SK-N-SH (cell line): ENCODE measurements at regions of chr5 and their contacts with region 1.

Region 1: DNA sequence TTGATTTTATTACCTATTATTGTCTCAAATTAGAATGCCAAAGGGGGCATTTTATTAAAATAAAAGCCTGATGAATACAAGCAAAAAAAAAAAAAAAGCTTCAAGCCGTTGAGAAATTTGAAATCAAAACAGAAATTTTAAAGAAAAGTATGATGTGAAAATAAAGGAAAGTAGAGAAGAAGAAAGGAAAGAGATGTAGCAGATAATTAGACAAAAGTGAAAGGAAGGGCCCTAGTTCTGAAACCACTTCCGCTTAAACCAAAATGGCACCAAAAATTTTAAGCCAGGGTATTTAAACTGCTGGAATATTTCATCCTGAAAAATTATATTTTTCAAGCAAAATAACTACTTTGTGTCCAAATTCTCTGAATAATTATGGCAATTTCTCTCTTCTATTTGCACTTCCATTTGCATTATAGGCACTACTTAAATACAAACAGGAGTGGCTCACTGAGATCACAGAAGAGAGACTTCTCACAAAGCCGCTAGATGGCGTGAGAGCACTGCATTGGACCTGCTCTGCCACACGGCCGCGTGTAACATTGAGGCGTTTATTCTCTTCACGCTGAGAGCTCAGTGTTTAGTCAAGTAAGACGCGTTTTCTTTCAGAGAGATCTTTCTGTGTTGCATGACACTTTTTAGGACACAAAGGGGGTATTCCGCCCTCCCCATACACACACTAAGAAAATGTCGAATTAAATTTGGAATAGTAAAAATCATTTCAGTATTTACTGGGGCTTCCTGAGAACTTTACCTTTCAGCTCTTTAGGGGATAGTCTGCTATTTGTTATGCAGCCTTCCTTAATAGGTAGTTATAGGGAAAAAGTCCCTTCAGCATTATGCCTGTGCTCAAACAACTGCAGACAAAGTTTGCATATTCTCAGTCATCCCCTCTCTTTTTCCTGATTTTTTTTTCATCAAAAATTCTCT is 368.4 kb upstream of the CCNH start:
- DNase-seq: peak; percentile 49
- H3K4me3 ChIP-seq: no peak overlapping the region; a peak in 1 of 4 replicates
- H3K27ac ChIP-seq: no peak overlapping the region
- H3K4me1 ChIP-seq: no peaks in the 10 kb centered on the region
- H3K27me3 ChIP-seq: peaks cover 11% of the 10 kb centered on the region; the same call in 1 of the 2 replicates
- CTCF ChIP-seq: peak; percentile 93
- EP300 ChIP-seq: no peak
- RAD21 ChIP-seq: peak; percentile 98

Region 2: DNA sequence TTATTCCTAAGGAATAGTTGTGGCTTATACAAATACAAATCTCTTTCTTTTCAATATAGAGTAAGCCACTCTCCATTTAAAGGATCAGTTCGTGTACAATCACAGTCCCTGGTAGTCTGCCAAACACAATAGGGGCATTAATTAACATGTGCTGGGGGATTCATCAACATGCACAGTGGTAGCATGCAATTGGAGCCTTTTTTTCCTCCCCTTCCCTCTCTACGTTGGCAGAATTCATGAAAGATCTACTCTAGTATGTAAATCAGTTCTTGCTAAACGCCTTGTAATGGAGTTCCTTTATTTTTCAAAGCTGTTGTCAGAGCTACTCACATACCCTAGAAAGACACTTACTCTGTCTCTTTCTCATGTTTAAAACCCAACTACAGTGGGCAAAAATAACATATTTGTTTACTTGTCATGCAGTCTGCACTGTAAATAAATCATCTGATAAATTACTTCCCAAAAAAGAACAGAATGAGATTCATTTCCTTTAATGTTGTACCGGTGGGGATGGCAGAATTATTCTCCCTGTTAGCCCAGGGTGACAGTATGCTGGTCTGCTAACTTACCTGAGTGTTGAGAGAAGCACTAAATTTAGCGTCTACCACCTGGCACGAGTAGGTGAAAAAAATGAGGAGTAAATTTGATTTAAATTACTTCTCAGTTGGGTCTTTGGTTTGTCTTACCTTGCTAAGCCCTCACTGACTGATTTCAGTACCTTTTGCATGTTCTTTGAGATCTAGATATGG is 26.9 kb before region 1 on chr5:
- CTCF ChIA-PET with region 1: interaction called, 16 read pairs
- POLR2A ChIA-PET with region 1: no interaction called
- DNase-seq: no peak
- H3K4me3 ChIP-seq: no peak overlapping the region
- H3K27ac ChIP-seq: no peak overlapping the region
- H3K4me1 ChIP-seq: no peaks in the 10 kb centered on the region
- H3K27me3 ChIP-seq: no peaks in the 10 kb centered on the region
- CTCF ChIP-seq: no peak
- EP300 ChIP-seq: no peak
- RAD21 ChIP-seq: no peak

Region 3: GRCh38 chr5:87770601-87771121 is 10.4 kb before region 1 on chr5:
- CTCF ChIA-PET with region 1: interaction called, 32 read pairs
- POLR2A ChIA-PET with region 1: no interaction called
- DNase-seq: peak; percentile 16
- H3K4me3 ChIP-seq: no peak overlapping the region
- H3K27ac ChIP-seq: no peak overlapping the region
- H3K4me1 ChIP-seq: no peaks in the 10 kb centered on the region
- H3K27me3 ChIP-seq: peaks cover 7% of the 10 kb centered on the region; the same call in 1 of the 2 replicates
- CTCF ChIP-seq: no peak
- EP300 ChIP-seq: no peak
- RAD21 ChIP-seq: no peak

Region 4: DNA sequence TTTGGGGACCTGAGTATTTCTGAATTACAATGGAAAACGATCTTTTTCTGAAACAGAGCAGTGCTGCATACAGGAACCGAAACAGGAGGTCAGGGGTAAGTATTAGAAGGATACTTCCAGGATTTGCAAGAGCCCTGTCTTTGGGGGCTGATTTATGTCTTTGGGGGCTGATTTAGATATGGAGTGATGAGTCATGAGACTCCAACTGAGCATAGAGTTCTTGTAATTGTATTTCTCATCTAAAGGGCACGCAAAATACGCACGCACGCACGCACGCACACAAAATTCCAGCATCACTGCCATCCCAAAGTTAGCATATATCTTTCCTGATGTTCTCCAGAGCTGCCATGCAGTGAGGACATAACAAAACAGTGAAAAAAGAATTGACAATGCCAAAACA is 46.4 kb after region 1 on chr5:
- CTCF ChIA-PET with region 1: interaction called, 12 read pairs
- POLR2A ChIA-PET with region 1: no interaction called
- DNase-seq: no peak
- H3K4me3 ChIP-seq: no peak overlapping the region
- H3K27ac ChIP-seq: no peak overlapping the region; a peak in 1 of 4 replicates
- H3K4me1 ChIP-seq: peaks cover 0 to 19% of the 10 kb centered on the region in 2 experiments; a peak in 1 of 4 replicates
- H3K27me3 ChIP-seq: no peaks in the 10 kb centered on the region
- CTCF ChIP-seq: no peak
- EP300 ChIP-seq: no peak
- RAD21 ChIP-seq: no peak

Region 5: DNA sequence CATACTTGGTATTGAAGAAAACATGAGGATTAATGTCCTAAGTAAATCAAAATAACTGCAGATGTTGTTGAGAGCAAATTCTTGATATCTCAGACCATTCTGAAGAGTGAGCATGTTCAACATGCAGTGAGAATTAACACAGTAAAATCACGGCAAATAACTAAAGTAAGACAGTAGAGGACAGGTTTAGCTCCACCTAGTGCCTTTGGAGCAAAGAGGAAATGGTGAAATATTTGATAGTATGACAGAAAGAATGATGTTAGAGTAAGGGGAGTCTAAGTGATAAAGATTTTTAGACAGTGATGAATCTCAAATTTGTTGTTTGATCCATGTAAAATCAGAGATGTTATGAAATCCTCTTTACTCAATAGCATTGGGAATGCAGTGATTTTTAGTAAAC is 63.4 kb after region 1 on chr5:
- CTCF ChIA-PET with region 1: interaction called, 11 read pairs
- POLR2A ChIA-PET with region 1: no interaction called
- DNase-seq: no peak
- H3K4me3 ChIP-seq: no peak overlapping the region
- H3K27ac ChIP-seq: no peak overlapping the region
- H3K4me1 ChIP-seq: no peaks in the 10 kb centered on the region
- H3K27me3 ChIP-seq: no peaks in the 10 kb centered on the region
- CTCF ChIP-seq: no peak
- EP300 ChIP-seq: no peak
- RAD21 ChIP-seq: peak; percentile 54

Region 6: GRCh38 chr5:88680253-88681132 is 899.4 kb after region 1 on chr5:
- CTCF ChIA-PET with region 1: interaction called, 83 read pairs
- POLR2A ChIA-PET with region 1: no interaction called
- DNase-seq: peak; percentile 94
- H3K4me3 ChIP-seq: peak overlapping the region; percentile 24 to 52
- H3K27ac ChIP-seq: no peak overlapping the region
- H3K4me1 ChIP-seq: peaks cover 6 to 10% of the 10 kb centered on the region in 2 experiments; a peak in 1 of 4 replicates
- H3K27me3 ChIP-seq: peaks cover 93% of the 10 kb centered on the region
- CTCF ChIP-seq: peak; percentile 90
- EP300 ChIP-seq: no peak
- RAD21 ChIP-seq: peak; percentile 73

Region 7: DNA sequence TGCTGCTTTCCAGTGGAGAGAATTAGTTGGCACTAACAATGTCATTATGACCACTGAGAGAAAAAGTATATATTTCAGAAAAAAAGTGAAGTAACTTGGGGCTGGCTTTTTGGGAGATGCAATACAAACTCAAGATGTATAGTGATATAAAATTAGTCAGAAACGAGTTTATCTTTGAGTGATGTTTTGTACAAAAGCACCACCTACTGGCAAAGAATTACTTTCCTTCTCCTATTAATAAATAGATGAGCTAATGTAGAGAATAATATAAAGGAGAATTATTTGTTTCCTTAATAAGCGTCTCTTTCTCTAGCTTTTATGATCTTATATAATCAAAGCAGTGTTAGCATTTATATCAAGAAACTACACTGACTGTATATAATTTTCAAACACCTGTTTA is 943.1 kb after region 1 on chr5:
- CTCF ChIA-PET with region 1: interaction called, 15 read pairs
- POLR2A ChIA-PET with region 1: no interaction called
- DNase-seq: no peak
- H3K4me3 ChIP-seq: no peak overlapping the region
- H3K27ac ChIP-seq: no peak overlapping the region
- H3K4me1 ChIP-seq: no peaks in the 10 kb centered on the region; a peak in 2 of 4 replicates
- H3K27me3 ChIP-seq: no peaks in the 10 kb centered on the region
- CTCF ChIP-seq: peak; percentile 67
- EP300 ChIP-seq: no peak
- RAD21 ChIP-seq: peak; percentile 57